ENCODE measurements at regions of chr7 and their contacts with region 1.

Region 1: GRCh38 chr7:2680792-2681490 is 7.1 kb upstream of the AMZ1 start:
- H3K4me3 Mint-ChIP-seq: no peak overlapping the region
- H3K27ac Mint-ChIP-seq: no peak overlapping the region
- H3K4me1 Mint-ChIP-seq: peaks cover 5% of the 10 kb centered on the region
- H3K27me3 Mint-ChIP-seq: peaks cover 41% of the 10 kb centered on the region

Region 2: GRCh38 chr7:2451171-2452073 is 229.5 kb before region 1 on chr7:
- intact Hi-C with region 1: loop called (anchors 1 kb)
- H3K4me3 Mint-ChIP-seq: peak overlapping the region; percentile 70
- H3K27ac Mint-ChIP-seq: peak overlapping the region; percentile 71
- H3K4me1 Mint-ChIP-seq: peaks cover 13% of the 10 kb centered on the region
- H3K27me3 Mint-ChIP-seq: peaks cover 18% of the 10 kb centered on the region

Region 3: DNA sequence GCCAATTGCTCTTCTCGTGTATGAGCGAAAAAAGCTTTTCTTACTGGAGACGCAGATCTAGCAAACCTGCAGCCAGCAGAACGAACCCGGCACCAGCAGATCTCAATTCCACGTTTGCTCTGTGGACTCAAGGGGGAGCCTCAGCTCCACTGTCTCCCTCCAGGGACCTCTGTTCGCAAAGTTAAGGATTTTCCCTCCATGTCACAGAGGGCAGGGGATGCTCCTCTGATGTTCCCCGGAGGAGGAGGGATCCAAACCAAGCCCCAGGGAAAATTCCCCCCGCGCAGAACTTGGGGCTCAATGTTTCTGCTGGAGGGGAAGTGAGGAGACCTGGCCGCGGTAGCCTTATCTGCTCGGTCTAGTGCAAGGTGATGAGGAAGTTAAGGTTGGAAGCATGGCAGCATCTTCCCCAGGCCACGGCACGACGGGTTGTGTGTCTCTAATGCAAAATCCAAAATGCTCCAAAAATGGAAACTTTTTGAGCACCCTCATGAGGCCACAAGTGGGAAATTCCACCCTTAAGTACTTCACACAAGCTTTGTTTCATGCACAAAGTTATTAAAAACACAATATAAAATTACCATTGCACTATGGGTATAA is 113.2 kb before region 1 on chr7:
- intact Hi-C with region 1: loop called (anchors 2 kb)
- H3K4me3 Mint-ChIP-seq: no peak overlapping the region
- H3K27ac Mint-ChIP-seq: no peak overlapping the region
- H3K4me1 Mint-ChIP-seq: peaks cover 35% of the 10 kb centered on the region
- H3K27me3 Mint-ChIP-seq: no peaks in the 10 kb centered on the region

Region 4: GRCh38 chr7:2641406-2642393 is 39.2 kb before region 1 on chr7:
- intact Hi-C with region 1: no loop called
- H3K4me3 Mint-ChIP-seq: peak overlapping the region; percentile 67
- H3K27ac Mint-ChIP-seq: peak overlapping the region; percentile 100
- H3K4me1 Mint-ChIP-seq: peaks cover 89% of the 10 kb centered on the region
- H3K27me3 Mint-ChIP-seq: no peaks in the 10 kb centered on the region

Measured in dendritic cell treated with granulocyte-macrophage colony-stimulating factor and Interleukin-4, amounts not matched to agents 40 ng/mL and 50 ng/mL, for 4 days (primary cell).